Activated CD4-positive, alpha-beta memory T cell treated with anti-CD3 and anti-CD28 coated beads for 36 hours (primary cell): ENCODE measurements at regions of chr17 and their contacts with region 1.

Region 1: GRCh38 chr17:16438557-16439302 is 23.4 kb downstream of the TRPV2 start:
- DNase-seq: peak; percentile 98
- H3K4me3 Mint-ChIP-seq: peak overlapping the region; percentile 96
- H3K27ac Mint-ChIP-seq: peak overlapping the region; percentile 97
- H3K4me1 Mint-ChIP-seq: peaks cover 44% of the 10 kb centered on the region
- H3K27me3 Mint-ChIP-seq: no peaks in the 10 kb centered on the region

Region 2: GRCh38 chr17:16215273-16215964 is 223.3 kb before region 1 on chr17 and contains the start of gene NCOR1:
- CTCF ChIA-PET with region 1: interaction called, 3 read pairs
- POLR2A ChIA-PET with region 1: no interaction called
- intact Hi-C with region 1: loop called (anchors 5 kb)
- DNase-seq: peak; percentile 93
- H3K4me3 Mint-ChIP-seq: peak within 1 kb of the TSS; percentile 85
- H3K27ac Mint-ChIP-seq: peak within 1 kb of the TSS; percentile 85
- H3K4me1 Mint-ChIP-seq: peaks cover 40% of the 10 kb centered on the region
- H3K27me3 Mint-ChIP-seq: no peaks in the 10 kb centered on the region
- total RNA-seq, gene NCOR1: 104 to 112 TPM

Region 3: GRCh38 chr17:16269658-16270057 is 169.1 kb before region 1 on chr17:
- CTCF ChIA-PET with region 1: no interaction called
- POLR2A ChIA-PET with region 1: no interaction called
- intact Hi-C with region 1: no loop called
- DNase-seq: no peak
- H3K4me3 Mint-ChIP-seq: no peak overlapping the region
- H3K27ac Mint-ChIP-seq: no peak overlapping the region
- H3K4me1 Mint-ChIP-seq: peaks cover 25% of the 10 kb centered on the region
- H3K27me3 Mint-ChIP-seq: no peaks in the 10 kb centered on the region

Region 4: GRCh38 chr17:16285957-16286640 is 152.6 kb before region 1 on chr17:
- CTCF ChIA-PET with region 1: no interaction called
- POLR2A ChIA-PET with region 1: interaction called, 4 read pairs
- intact Hi-C with region 1: loop called (anchors 1 kb)
- DNase-seq: peak; percentile 90
- H3K4me3 Mint-ChIP-seq: peak overlapping the region; percentile 68
- H3K27ac Mint-ChIP-seq: peak overlapping the region; percentile 94
- H3K4me1 Mint-ChIP-seq: peaks cover 52% of the 10 kb centered on the region
- H3K27me3 Mint-ChIP-seq: no peaks in the 10 kb centered on the region

Region 5: GRCh38 chr17:16297367-16298139 is 141.2 kb before region 1 on chr17:
- CTCF ChIA-PET with region 1: no interaction called
- POLR2A ChIA-PET with region 1: no interaction called
- intact Hi-C with region 1: no loop called
- DNase-seq: no peak
- H3K4me3 Mint-ChIP-seq: no peak overlapping the region
- H3K27ac Mint-ChIP-seq: no peak overlapping the region
- H3K4me1 Mint-ChIP-seq: peaks cover 16% of the 10 kb centered on the region
- H3K27me3 Mint-ChIP-seq: no peaks in the 10 kb centered on the region

Region 6: DNA sequence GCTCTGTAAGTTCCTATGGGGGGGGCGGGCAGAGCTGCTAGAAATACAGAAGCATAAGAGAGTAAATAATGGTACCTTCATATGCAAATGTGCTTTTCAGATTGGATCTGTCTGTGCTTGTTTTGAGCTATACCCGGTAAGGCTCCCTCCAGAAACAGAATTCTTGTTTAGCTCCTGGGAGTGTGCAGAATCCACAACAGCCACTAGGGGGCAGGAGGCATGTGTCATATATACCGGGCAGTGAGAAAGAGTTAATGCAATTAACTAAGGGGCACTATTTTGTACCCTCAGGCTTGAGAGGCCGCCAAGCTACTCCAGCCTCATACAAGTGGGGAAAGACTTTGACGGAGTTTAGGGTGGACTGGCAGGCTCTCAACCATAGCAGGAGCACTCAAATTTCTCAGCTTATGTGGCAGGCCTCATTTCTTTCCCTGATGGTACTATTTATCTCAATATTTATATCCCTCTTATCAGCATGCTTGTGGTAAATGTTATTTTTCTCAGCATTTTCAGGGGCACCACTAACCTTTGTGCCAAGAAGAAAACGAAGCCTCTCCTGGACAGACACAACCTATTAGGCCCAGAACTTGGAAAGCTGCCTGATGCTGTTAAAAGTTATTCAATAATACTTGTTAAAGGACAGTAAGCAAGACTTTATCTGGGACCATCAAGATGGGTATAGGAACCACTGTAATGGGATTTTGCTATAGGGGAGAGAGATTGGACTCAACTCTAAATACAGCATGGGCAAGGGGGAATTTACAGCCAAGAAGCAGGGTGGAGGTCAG is 74.8 kb before region 1 on chr17:
- CTCF ChIA-PET with region 1: interaction called, 23 read pairs
- POLR2A ChIA-PET with region 1: interaction called, 3 read pairs
- intact Hi-C with region 1: no loop called
- DNase-seq: peak; percentile 86
- H3K4me3 Mint-ChIP-seq: no peak overlapping the region
- H3K27ac Mint-ChIP-seq: no peak overlapping the region
- H3K4me1 Mint-ChIP-seq: peaks cover 7% of the 10 kb centered on the region
- H3K27me3 Mint-ChIP-seq: no peaks in the 10 kb centered on the region

Region 7: GRCh38 chr17:16415031-16415924 is 23.5 kb before region 1 on chr17 and contains the start of gene TRPV2:
- CTCF ChIA-PET with region 1: interaction called, 24 read pairs
- POLR2A ChIA-PET with region 1: interaction called, 61 read pairs
- intact Hi-C with region 1: loop called (anchors 1 kb)
- DNase-seq: peak; percentile 72
- H3K4me3 Mint-ChIP-seq: peak within 1 kb of the TSS; percentile 94
- H3K27ac Mint-ChIP-seq: peak within 1 kb of the TSS; percentile 100
- H3K4me1 Mint-ChIP-seq: peaks cover 47% of the 10 kb centered on the region
- H3K27me3 Mint-ChIP-seq: no peaks in the 10 kb centered on the region
- total RNA-seq, gene TRPV2: 46.0 to 50.6 TPM

Region 8: DNA sequence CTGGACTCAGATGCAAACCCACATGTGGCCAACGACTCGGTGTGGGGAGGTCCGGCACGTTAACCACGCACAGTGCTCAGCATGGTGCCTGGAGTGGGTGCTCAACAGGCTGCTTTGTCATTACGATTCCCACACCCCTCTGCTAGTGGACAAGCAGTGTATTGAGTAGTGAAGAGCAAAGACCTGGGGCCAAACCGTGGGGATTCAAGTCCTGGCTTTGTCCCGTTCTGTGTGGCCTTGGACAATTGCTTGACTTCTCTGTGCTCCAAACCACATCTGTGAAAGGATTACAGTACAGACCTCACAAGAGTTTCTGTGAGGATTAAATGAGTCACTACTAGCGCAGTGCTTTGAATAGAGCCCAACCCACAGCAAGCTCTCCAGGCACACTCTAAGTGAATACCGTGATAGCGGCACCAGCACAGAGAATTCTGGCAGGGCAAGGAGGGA is 10.4 kb after region 1 on chr17:
- CTCF ChIA-PET with region 1: interaction called, 21 read pairs
- POLR2A ChIA-PET with region 1: interaction called, 16 read pairs
- intact Hi-C with region 1: no loop called
- DNase-seq: peak; percentile 29
- H3K4me3 Mint-ChIP-seq: no peak overlapping the region
- H3K27ac Mint-ChIP-seq: no peak overlapping the region
- H3K4me1 Mint-ChIP-seq: peaks cover 42% of the 10 kb centered on the region
- H3K27me3 Mint-ChIP-seq: no peaks in the 10 kb centered on the region

Region 9: DNA sequence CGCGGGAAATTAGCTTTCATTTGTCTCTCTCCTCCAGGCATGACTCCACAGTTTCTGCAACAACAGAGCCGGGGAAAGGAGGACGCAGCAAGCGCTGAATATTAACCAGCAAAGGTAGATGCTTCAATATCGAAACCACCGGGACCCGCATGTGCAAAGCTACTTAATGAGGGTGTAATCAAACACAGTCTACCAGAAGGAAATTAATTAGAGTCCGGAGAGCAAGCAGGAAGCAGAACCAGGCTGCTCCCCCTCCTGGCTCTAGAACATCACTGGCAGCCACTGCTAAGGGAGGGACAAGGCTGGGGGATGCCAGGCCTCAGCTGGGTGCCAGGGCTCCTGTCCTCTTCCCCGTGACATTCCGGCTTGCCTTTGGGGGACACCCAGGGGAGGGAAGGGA is 31.5 kb after region 1 on chr17:
- CTCF ChIA-PET with region 1: no interaction called
- POLR2A ChIA-PET with region 1: no interaction called
- intact Hi-C with region 1: no loop called
- DNase-seq: no peak
- H3K4me3 Mint-ChIP-seq: no peak overlapping the region
- H3K27ac Mint-ChIP-seq: no peak overlapping the region
- H3K4me1 Mint-ChIP-seq: no peaks in the 10 kb centered on the region
- H3K27me3 Mint-ChIP-seq: no peaks in the 10 kb centered on the region

Region 10: GRCh38 chr17:16653209-16654041 is 214.7 kb after region 1 on chr17 and contains the start of gene ZNF624:
- CTCF ChIA-PET with region 1: no interaction called
- POLR2A ChIA-PET with region 1: no interaction called
- intact Hi-C with region 1: loop called (anchors 1 kb)
- DNase-seq: peak; percentile 92
- H3K4me3 Mint-ChIP-seq: peak within 1 kb of the TSS; percentile 81
- H3K27ac Mint-ChIP-seq: peak within 1 kb of the TSS; percentile 33
- H3K4me1 Mint-ChIP-seq: peaks cover 13% of the 10 kb centered on the region
- H3K27me3 Mint-ChIP-seq: peaks cover 3% of the 10 kb centered on the region
- total RNA-seq, gene ZNF624: 3.9 to 5.0 TPM